ENCODE measurements at regions of chr1 and their contacts with region 1.

Region 1: DNA sequence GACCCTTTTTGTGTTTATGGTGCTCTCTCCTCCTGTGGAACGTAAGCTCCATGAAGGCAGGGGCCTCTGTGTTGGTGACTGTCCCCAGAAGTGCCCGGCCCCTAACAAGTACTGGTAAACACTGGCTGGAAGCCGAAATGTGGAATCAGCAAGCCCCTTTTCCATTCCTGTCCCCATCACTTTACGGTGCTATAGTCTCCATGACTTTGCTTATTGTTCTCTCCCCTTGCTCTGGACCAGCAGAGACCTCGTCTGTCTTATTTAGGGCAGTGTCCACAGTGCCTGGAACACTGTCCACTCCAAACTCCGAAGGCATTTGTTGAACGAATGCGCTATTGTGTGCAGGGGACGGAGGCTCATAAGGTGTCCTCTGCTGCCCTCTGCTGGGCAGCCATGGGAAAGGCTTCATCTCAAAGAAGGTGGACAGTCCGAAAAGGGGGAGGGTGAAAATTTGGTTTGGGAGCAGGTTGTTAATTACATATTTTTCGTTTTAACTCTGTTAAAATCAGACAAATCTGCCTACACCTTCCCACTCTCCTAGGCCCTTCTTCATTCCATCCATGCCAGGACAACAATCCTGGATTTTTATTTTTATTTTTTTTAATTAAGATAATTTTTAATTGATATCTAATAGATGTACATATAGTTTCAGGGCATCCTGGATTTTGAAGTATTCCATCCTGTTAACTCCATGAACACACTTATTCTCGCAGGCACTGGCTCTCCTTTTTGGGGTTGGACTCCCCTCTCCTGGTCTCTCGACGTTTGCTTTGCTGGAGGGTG is 115.6 kb downstream of the PGBD5 start:
- DNase-seq: peak; percentile 78
- ATAC-seq: peak; percentile 95
- H3K4me3 ChIP-seq: no peak overlapping the region
- H3K27ac ChIP-seq: no peak overlapping the region
- H3K4me1 ChIP-seq: no peaks in the 10 kb centered on the region
- H3K27me3 ChIP-seq: no peaks in the 10 kb centered on the region
- CTCF ChIP-seq: peak; percentile 90

Region 2: DNA sequence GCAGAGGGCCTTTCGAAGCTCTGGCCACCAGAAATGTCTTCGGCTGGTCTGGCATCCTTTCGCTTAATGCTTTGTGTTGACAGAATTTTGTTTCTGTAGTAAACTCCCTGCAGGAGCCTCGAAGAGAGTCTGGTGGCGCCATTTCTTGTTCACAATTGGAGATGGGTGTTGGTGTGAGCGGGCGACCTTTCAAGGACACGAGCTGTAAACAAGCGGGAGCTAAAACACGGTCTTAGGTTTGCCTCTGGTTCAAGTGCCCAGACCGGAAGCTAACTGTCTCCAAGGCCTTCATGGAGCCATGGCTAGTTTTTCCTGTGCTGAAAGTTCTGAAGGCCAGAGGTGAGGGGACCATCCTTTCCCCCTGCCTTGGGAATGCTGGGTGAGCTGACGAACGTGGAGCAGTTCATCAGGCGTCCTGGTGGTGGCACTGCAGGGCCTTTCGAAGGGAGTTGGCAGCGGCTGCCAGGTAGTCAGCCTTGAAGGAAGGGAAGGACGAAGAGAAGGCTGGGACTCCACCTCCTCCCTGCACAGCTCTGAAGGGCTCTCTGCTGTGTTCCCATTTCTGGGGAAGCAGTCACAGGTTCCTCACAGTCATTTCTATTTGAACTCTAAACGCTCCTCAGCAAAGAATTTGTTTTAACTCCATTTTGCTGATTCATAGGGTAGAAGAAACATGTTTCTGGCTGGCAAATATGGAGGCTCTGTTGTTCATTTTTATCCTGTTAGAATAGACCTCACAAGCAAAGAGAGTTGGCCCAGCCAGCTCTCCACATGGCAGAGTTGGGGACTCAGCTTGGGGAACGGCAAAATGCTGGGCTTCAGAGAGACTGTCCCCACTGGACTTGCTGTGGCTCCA is 649.3 kb before region 1 on chr1:
- intact Hi-C with region 1: loop called (anchors 10 kb)
- DNase-seq: peak; percentile 89
- ATAC-seq: peak; percentile 99
- H3K4me3 ChIP-seq: no peak overlapping the region
- H3K27ac ChIP-seq: no peak overlapping the region
- H3K4me1 ChIP-seq: peaks cover 5% of the 10 kb centered on the region
- H3K27me3 ChIP-seq: no peaks in the 10 kb centered on the region
- CTCF ChIP-seq: peak; percentile 92

Region 3: DNA sequence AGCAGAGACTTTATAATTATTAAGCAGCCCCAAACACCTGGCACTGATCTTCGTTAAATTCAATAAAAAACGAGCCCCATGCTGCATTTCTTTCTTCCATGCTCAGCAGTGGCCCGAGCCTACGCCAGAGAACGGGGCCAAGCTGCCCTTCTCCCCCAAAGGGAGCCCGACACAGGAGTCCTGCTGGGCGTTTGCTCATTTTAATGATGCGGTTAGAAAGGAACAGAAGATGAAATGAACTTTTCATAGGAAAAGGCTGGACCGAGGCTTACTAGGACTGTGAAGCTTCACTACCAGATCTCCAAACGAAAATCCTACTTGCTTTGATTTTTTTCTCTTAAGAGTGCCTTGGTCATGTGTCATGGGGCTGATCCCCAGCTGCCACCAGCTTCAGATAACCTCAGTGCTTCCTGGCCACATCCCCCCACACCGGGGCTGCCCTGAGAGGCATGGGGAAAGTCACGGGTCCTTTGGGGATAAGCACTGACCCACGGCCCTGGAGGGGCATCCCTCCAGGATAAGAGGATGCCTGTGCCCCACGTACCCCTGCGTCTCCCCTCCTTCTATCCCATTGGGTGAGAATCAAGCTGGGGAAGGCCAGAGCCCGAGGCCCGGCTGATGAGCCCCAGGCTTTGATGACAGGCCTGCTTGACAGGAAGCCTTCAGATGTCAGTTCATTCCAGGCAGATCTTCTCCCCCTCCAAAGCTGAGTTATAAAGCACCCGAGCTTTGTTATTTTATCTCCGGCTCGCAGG is 81.4 kb after region 1 on chr1:
- intact Hi-C with region 1: no loop called
- DNase-seq: no peak
- ATAC-seq: no peak
- H3K4me3 ChIP-seq: no peak overlapping the region
- H3K27ac ChIP-seq: no peak overlapping the region
- H3K4me1 ChIP-seq: no peaks in the 10 kb centered on the region
- H3K27me3 ChIP-seq: no peaks in the 10 kb centered on the region
- CTCF ChIP-seq: no peak

Measured in upper lobe of right lung (tissue), 1 donor.